Activated naive CD4-positive, alpha-beta T cell treated with anti-CD3 and anti-CD28 coated beads for 36 hours (primary cell): ENCODE measurements at regions of chr4 and their contacts with region 1.

Region 1: GRCh38 chr4:781493-782216 is 44.3 kb downstream of the CPLX1 start:
- DNase-seq: peak; percentile 99
- H3K4me3 Mint-ChIP-seq: peak overlapping the region; percentile 83
- H3K27ac Mint-ChIP-seq: peak overlapping the region; percentile 87
- H3K4me1 Mint-ChIP-seq: peaks cover 55% of the 10 kb centered on the region
- H3K27me3 Mint-ChIP-seq: peaks cover 16% of the 10 kb centered on the region

Region 2: DNA sequence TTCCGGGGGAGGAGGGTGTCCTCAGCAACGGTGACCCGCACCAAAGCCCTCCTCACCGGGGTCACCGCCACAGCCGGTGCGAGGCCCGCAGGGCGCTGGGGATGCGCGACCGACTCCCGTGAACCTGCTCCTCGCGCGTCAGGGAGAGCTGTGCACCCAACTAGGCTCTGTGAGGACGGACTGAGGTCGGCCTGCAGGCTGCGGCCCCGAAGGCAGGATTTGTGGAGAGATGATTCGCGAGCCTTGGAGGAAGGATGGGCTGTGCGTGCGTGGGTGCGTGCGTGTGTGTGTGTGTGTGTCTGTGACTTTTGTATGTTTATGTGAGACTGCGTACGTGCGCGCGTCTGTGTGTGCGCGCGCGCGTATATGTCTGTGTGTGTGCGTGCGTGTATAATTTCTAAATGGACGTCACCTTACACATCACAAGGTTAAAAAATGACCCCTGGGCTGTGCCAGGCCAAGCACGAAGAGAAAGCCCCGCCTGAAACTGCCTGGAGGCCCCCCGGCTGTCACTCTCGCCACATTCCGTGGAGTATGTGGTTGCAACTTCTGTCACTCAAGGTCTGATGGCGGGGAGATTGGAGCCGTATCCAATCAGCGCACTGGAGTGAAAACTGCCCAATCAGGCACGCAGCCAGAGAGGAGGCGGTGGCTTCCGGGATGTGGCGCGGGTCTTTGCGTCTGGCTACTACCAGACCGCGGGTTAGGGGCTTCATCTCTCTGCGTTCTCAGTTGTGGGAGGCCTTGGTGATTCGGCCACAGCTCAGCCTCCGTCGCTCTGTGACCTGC is 444.3 kb before region 1 on chr4 and contains the start of gene ZNF141:
- CTCF ChIA-PET with region 1: no interaction called
- intact Hi-C with region 1: loop called (anchors 2 kb)
- DNase-seq: peak; percentile 96
- H3K4me3 Mint-ChIP-seq: peak within 1 kb of the TSS; percentile 99
- H3K27ac Mint-ChIP-seq: peak within 1 kb of the TSS; percentile 99
- H3K4me1 Mint-ChIP-seq: peaks cover 22% of the 10 kb centered on the region
- H3K27me3 Mint-ChIP-seq: no peaks in the 10 kb centered on the region
- total RNA-seq, gene ZNF141: 21.2 to 23.2 TPM

Region 3: GRCh38 chr4:674172-675035 is 107.3 kb before region 1 on chr4 and contains the starts of genes ATP5ME and MYL5:
- CTCF ChIA-PET with region 1: no interaction called
- intact Hi-C with region 1: loop called (anchors 1 kb)
- DNase-seq: peak; percentile 97
- H3K4me3 Mint-ChIP-seq: peak within 1 kb of the TSS; percentile 84
- H3K27ac Mint-ChIP-seq: peak within 1 kb of the TSS; percentile 84
- H3K4me1 Mint-ChIP-seq: peaks cover 15% of the 10 kb centered on the region
- H3K27me3 Mint-ChIP-seq: no peaks in the 10 kb centered on the region
- total RNA-seq, gene ATP5ME: 254 to 257 TPM
- total RNA-seq, gene MYL5: 12.0 to 12.9 TPM

Region 4: GRCh38 chr4:856225-856901 is 74.7 kb after region 1 on chr4:
- CTCF ChIA-PET with region 1: no interaction called
- intact Hi-C with region 1: no loop called
- DNase-seq: no peak
- H3K4me3 Mint-ChIP-seq: no peak overlapping the region
- H3K27ac Mint-ChIP-seq: peak overlapping the region; percentile 31
- H3K4me1 Mint-ChIP-seq: no peaks in the 10 kb centered on the region
- H3K27me3 Mint-ChIP-seq: no peaks in the 10 kb centered on the region

Region 5: DNA sequence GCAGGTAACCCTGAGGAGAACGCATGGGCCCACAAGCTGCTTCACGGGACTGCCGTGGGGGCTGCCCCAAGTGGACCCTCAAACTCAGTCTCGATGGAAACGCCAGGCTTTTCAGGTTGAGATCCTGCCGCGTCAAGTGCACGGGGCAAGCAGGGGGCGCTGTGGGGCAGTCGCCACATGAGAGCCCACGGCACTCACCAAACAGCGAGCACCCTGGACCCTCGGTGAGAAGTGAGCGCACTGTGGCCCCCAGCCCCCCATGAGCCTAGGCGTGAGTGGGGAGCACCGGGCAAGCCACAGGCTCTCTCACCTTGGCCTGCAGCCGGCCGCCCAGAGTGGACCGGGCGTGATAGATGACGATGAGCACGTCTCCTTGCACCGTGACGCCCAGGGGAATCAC is 95.1 kb after region 1 on chr4:
- CTCF ChIA-PET with region 1: no interaction called
- intact Hi-C with region 1: loop called (anchors 5 kb)
- DNase-seq: no peak
- H3K4me3 Mint-ChIP-seq: no peak overlapping the region
- H3K27ac Mint-ChIP-seq: no peak overlapping the region
- H3K4me1 Mint-ChIP-seq: peaks cover 27% of the 10 kb centered on the region
- H3K27me3 Mint-ChIP-seq: no peaks in the 10 kb centered on the region

Region 6: DNA sequence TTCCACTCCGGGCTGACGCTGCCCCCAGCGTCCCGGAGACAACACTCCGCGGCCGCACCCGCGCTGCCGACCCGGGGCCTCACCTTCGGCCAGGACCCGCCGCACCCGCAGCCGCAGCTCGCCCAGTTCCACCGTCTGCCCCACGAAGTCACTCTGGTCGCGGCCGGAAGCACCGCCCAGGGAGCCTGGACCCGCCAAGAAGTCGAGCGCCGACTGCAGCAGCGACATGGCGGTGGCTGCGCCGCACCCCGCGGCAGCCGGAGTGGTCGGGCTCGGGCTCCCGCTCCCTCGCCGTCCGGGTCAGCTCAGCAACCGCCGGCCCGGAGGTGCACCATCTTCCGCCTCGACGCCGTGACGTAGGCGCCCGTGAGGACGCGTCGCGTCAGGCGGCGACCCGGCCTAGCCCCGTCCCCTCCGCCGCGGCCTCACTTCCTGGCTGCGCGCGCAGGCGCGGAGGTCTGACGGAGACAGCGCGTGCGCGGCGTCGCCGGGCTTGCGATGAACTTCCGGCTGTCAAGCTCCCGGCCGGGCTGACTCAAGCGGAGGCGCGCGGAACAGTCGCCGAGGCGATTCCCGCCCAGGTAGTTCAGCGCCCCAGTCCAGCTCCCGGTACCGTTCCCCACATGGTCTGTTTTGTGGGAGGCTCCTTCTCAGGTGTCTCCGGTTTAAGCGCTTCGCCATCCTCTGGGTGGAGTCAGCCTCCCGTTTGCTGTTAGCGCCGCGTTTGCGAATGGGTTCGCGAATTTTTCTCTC is 150.5 kb after region 1 on chr4 and contains the starts of genes GAK and TMEM175:
- CTCF ChIA-PET with region 1: no interaction called
- intact Hi-C with region 1: loop called (anchors 1 kb)
- DNase-seq: peak; percentile 96
- H3K4me3 Mint-ChIP-seq: peak within 1 kb of the TSS; percentile 94
- H3K27ac Mint-ChIP-seq: peak within 1 kb of the TSS; percentile 90
- H3K4me1 Mint-ChIP-seq: peaks cover 45% of the 10 kb centered on the region
- H3K27me3 Mint-ChIP-seq: no peaks in the 10 kb centered on the region
- total RNA-seq, gene GAK: 87.6 to 96.8 TPM
- total RNA-seq, gene TMEM175: 13.9 to 15.8 TPM

Region 7: DNA sequence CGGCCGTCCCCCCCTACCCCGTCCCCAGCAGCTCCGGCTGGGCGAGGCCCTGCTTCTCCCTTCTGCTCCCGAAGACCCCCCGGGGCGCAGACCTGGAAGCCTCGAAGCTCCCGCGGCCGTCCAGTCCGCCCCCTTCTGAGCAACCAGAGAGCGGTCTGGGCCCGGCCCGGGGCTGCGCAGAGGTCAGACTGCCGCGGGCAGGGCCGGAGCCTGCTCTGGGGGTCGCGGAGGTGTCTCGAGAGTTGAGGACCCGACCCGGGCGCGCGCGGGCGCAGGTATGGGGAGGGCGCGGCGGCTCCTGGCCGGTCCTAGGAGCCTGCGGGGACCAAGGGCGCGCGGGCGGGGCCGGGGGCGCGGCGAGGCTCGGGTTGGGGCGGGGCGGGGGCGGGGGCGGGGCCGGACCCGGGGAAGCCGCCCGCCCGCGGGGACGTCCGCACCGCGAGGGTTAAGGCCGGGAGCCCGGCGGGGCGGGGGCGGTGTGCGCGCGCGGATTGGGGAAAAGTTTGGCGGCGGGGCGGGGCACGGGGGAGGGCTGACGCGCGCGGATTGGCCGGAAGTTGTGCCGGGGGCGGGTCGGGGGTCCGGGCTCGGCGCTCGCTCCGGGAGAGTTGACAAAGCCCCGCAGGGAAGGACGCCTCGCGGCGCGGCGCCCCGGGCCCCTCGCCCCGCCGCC is 229.5 kb after region 1 on chr4 and contains the start of gene FGFRL1:
- CTCF ChIA-PET with region 1: no interaction called
- intact Hi-C with region 1: loop called (anchors 1 kb)
- DNase-seq: peak; percentile 95
- H3K4me3 Mint-ChIP-seq: peak within 1 kb of the TSS; percentile 73
- H3K27ac Mint-ChIP-seq: peak within 1 kb of the TSS; percentile 46
- H3K4me1 Mint-ChIP-seq: peaks cover 11% of the 10 kb centered on the region
- H3K27me3 Mint-ChIP-seq: peaks cover 26% of the 10 kb centered on the region
- total RNA-seq, gene FGFRL1: 7.6 to 8.0 TPM

Region 8: DNA sequence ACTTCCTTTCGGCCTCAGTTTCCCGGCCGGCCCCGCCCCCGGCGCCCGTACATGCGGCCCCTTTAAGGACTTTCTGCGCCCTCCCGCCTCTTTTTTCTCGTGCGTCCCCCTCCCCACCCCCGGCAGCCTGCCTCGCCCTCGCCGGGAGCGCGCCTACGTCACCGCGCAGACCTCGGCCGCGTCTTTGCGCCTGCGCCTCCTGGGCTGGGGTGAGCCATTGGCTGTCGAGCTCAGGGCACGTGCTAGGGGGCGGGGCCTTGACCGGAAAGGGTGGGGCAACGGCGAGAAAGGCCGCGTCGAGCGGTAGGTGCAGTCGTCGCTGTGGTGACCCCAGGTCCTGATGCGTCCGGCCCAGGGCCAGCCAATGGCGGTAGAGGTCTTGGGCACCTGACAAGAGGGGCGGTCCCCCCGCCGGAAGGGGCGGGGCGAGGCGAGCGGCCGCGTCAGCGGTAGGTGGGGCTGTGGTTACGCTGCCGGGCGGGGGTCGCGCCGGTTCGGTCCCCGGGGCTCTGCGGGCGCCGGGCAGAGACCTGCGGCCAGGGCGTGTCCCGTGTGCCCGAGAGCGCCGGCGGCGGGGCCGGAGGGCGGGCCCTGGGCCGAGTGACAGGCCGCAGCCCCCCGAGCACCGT is 565.2 kb after region 1 on chr4 and contains the start of gene UVSSA:
- CTCF ChIA-PET with region 1: no interaction called
- intact Hi-C with region 1: loop called (anchors 5 kb)
- DNase-seq: peak; percentile 100
- H3K4me3 Mint-ChIP-seq: peak within 1 kb of the TSS; percentile 80
- H3K27ac Mint-ChIP-seq: peak within 1 kb of the TSS; percentile 78
- H3K4me1 Mint-ChIP-seq: peaks cover 46% of the 10 kb centered on the region
- H3K27me3 Mint-ChIP-seq: no peaks in the 10 kb centered on the region
- total RNA-seq, gene UVSSA: 20.0 to 24.3 TPM